Calu3 (cell line): ENCODE measurements at regions of chr11 and their contacts with region 1.

Region 1: DNA sequence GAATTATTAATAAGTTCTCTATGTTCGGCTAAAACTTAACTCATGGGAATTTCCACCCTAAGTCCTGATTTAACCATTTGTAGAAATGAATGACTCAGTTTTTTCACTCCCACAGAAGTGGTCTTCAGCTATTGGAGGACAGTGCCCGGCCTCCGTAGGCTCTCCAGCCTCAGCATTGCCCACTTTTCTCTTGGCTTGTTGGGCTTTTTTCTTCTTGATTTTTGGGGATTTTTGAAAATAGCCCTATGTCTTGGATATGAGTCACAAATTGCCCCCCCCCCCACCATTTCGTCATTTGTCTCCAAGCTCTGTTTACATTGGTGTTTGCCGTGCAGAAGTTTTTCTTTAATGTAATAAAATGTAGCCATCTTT is 66.7 kb downstream of the PACS1 start:
- DNase-seq: no peak
- H3K4me3 Mint-ChIP-seq: no peak overlapping the region
- H3K27ac Mint-ChIP-seq: no peak overlapping the region
- H3K4me1 Mint-ChIP-seq: peaks cover 11% of the 10 kb centered on the region
- H3K27me3 Mint-ChIP-seq: no peaks in the 10 kb centered on the region
- CTCF ChIP-seq: no peak

Region 2: GRCh38 chr11:65919146-65920033 is 217.3 kb before region 1 on chr11 and contains the start of gene DRAP1:
- CTCF ChIA-PET with region 1: no interaction called
- intact Hi-C with region 1: no loop called
- DNase-seq: peak; percentile 98
- H3K4me3 Mint-ChIP-seq: peak within 1 kb of the TSS; percentile 94
- H3K27ac Mint-ChIP-seq: peak within 1 kb of the TSS; percentile 56
- H3K4me1 Mint-ChIP-seq: peaks cover 37% of the 10 kb centered on the region
- H3K27me3 Mint-ChIP-seq: no peaks in the 10 kb centered on the region
- CTCF ChIP-seq: no peak
- total RNA-seq, gene DRAP1: 106 and 114 TPM in 2 replicates

Region 3: GRCh38 chr11:66035653-66036333 is 100.9 kb before region 1 on chr11:
- CTCF ChIA-PET with region 1: no interaction called
- intact Hi-C with region 1: no loop called
- DNase-seq: no peak
- H3K4me3 Mint-ChIP-seq: no peak overlapping the region
- H3K27ac Mint-ChIP-seq: no peak overlapping the region
- H3K4me1 Mint-ChIP-seq: no peaks in the 10 kb centered on the region
- H3K27me3 Mint-ChIP-seq: peaks cover 30% of the 10 kb centered on the region
- CTCF ChIP-seq: no peak

Region 4: GRCh38 chr11:66081505-66081904 is 55.2 kb before region 1 on chr11:
- CTCF ChIA-PET with region 1: no interaction called
- intact Hi-C with region 1: loop called (anchors 2 kb)
- DNase-seq: peak; percentile 64
- H3K4me3 Mint-ChIP-seq: no peak overlapping the region
- H3K27ac Mint-ChIP-seq: no peak overlapping the region
- H3K4me1 Mint-ChIP-seq: peaks cover 47% of the 10 kb centered on the region
- H3K27me3 Mint-ChIP-seq: no peaks in the 10 kb centered on the region
- CTCF ChIP-seq: no peak